ENCODE measurements at regions of chr2 and their contacts with region 1.

Region 1: GRCh38 chr2:72993147-72993932 is 76.0 kb downstream of the EMX1 start:
- DNase-seq: no peak
- ATAC-seq: peak in 1 of 2 donors; percentile 6

Region 2: DNA sequence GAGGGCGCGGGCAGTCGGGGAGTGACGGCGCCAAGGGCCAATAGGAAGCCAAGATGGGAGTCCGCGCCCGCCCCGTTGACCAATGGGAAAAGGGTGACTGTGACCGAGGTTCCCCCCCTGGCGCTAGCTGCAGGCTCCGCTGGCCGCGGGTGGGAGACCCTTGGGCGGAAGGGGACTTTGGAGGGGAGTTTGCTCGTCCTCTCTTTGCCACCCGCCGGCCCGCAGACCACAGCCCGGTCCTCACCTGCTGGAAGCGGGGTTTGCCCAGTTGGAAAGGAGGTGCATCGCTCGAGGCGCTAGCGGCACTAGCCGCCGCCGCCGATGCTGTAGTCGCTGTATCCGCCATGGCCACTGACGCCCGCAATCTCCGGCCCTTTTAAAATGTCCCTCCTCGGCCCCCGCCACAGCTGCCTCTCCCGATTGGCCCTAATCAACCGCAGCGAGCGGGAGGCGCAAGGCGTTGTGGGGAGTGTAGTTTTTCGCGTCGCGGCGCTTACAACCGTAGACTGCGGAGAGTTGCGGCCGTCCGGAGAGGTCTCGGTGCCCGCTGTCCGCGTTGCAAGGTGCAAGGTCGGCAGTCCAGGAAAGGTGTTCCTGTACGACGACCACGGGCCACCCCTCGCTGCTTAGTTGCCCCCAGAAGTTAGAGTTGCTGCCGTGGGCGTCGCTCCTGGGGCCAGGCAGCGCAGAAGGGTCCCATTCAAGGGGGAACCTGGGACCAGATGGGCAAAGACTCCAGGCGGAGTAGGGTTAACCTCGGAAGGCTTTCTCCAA is 78.2 kb after region 1 on chr2 and contains the start of gene SFXN5:
- intact Hi-C with region 1: no loop called
- DNase-seq: peak; percentile 98
- ATAC-seq: peak; percentile 97
- total RNA-seq, gene SFXN5: 9.0 to 10.5 TPM

Region 3: GRCh38 chr2:73163483-73164367 is 170.4 kb after region 1 on chr2:
- intact Hi-C with region 1: loop called in 1 of 2 experiments (anchors 2 kb)
- DNase-seq: peak; percentile 64
- ATAC-seq: peak; percentile 86

Region 4: DNA sequence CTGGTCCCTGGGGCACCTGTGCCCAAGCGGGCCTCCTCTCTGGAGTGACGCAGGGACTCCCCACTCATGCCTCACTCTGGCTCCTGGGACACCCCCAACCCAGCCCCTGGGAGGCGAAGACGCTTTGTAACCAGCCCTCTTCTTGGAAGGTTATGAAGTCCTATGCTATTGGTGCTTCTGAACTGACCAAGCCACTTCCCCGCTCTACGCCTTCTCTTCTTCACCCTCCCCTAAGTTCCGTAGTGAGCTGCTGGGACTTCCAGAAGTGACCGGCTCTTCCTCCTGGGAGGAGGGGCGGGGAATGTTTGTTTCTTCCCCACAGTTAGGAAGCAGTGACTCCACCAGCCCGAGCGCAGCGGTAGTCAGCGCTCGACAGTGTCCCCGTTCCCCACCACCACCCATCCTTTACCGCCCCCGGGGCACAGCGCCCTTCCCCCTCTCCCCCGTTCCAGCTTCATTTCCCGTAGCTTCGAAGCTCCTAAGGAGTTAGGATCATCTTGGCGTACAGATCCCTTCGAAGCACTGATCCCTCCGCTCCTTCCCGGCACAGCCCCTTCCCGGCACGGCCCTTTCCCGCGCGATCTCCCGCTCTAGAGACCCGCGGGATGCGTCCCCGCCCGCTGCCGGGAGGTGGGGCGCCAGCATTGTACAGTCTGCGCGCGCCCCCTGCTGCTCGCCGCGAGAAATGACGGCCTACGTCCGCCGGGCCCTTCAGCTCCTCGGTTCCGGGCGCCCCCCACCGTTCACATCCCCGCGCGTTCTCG is 183.7 kb after region 1 on chr2:
- intact Hi-C with region 1: loop called (anchors 5 to 10 kb)
- DNase-seq: peak; percentile 94
- ATAC-seq: peak; percentile 92 to 93

Measured in left cardiac atrium (tissue), 4 donors.